CD4-positive, alpha-beta memory T cell (primary cell): ENCODE measurements at regions of chr12 and their contacts with region 1.

Region 1: GRCh38 chr12:110742718-110743570 is at the start of gene PPP1CC:
- DNase-seq: peak; percentile 91 to 95 (median 92)
- H3K4me3 ChIP-seq: peak within 1 kb of the TSS; percentile 66 to 69
- H3K4me3 Mint-ChIP-seq: peak within 1 kb of the TSS; percentile 96 to 100 (median 100)
- H3K27ac ChIP-seq: peak within 1 kb of the TSS; percentile 59
- H3K27ac Mint-ChIP-seq: peak within 1 kb of the TSS; percentile 96 to 99 (median 98)
- H3K4me1 ChIP-seq: peaks cover 32% of the 10 kb centered on the region
- H3K4me1 Mint-ChIP-seq: peaks cover 26 to 65% (median 41%) of the 10 kb centered on the region in 4 donors
- H3K27me3 ChIP-seq: no peaks in the 10 kb centered on the region
- H3K27me3 Mint-ChIP-seq: no peaks in the 10 kb centered on the region
- total RNA-seq, gene PPP1CC: 147 to 168 TPM

Region 2: GRCh38 chr12:110403146-110403975 is 339.6 kb before region 1 on chr12 and contains the start of gene ANAPC7:
- CTCF ChIA-PET with region 1: no interaction called
- POLR2A ChIA-PET with region 1: interaction called, 3 read pairs
- intact Hi-C with region 1: loop called (anchors 1 kb)
- DNase-seq: peak; percentile 88 to 90 (median 89)
- H3K4me3 ChIP-seq: peak within 1 kb of the TSS; percentile 80 to 93
- H3K4me3 Mint-ChIP-seq: peak within 1 kb of the TSS; percentile 98 to 100 (median 100)
- H3K27ac ChIP-seq: peak within 1 kb of the TSS; percentile 82
- H3K27ac Mint-ChIP-seq: peak within 1 kb of the TSS in 6 of 7 donors; percentile 98 to 99 (median 99)
- H3K4me1 ChIP-seq: peaks cover 32% of the 10 kb centered on the region
- H3K4me1 Mint-ChIP-seq: peaks cover 18 to 44% (median 30%) of the 10 kb centered on the region in 4 donors
- H3K27me3 ChIP-seq: no peaks in the 10 kb centered on the region
- H3K27me3 Mint-ChIP-seq: no peaks in the 10 kb centered on the region
- total RNA-seq, gene ANAPC7: 69.9 to 70.1 TPM

Region 3: DNA sequence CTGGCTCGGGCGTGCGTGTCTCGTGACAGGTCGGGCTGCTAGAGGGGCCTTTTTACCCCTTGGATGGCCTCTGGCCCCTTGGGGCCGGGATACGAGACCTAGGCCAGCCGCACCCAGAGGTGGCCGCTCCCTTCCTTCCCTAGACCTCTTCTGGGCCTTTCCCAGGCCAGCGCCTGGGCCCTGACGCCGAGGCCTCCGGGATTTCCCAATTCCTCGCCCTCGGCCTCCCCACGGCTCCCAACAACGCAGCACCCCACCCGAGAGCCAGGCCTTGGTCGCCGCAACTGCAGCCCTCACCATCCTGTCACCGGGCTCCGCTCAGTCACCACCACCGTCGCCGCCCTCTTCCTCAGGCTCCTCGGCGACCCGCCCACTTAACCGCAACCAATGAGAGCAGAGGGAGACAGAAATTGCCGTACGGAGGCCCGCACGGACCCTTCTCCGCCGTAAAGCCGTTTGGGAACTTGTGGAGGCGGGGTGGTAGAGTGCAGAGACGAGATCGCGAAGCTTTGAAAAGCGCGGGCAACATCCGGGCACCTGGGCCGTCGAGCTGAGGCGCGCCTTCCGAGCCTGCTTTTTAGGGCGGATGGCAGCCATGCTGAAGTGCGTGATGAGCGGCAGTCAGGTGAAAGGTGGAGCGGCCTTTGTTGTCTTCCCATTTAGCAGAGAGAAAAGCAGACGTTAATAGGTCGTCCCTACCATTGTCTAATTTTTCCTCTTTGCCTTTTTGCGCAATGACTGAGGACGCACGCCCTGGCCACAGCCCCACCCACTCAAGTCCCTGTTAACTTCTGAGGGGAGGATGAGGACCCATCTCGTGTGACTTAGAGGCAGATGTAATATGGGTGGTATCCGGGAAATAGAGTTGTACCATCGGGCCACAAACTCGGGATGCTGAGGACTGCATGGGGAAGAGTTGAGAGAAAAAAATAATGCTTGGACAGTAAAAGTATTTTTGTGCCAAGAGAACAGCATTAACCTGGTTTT is 240.9 kb before region 1 on chr12 and contains the starts of genes RAD9B and VPS29:
- CTCF ChIA-PET with region 1: no interaction called
- POLR2A ChIA-PET with region 1: interaction called, 3 read pairs
- intact Hi-C with region 1: loop called (anchors 2 kb)
- DNase-seq: peak; percentile 99 to 100 (median 99)
- H3K4me3 ChIP-seq: peak within 1 kb of the TSS; percentile 85 to 91
- H3K4me3 Mint-ChIP-seq: peak within 1 kb of the TSS; percentile 96 to 99 (median 98)
- H3K27ac ChIP-seq: peak within 1 kb of the TSS; percentile 94
- H3K27ac Mint-ChIP-seq: peak within 1 kb of the TSS; percentile 95 to 99 (median 97)
- H3K4me1 ChIP-seq: peaks cover 35% of the 10 kb centered on the region
- H3K4me1 Mint-ChIP-seq: peaks cover 20 to 44% (median 30%) of the 10 kb centered on the region in 4 donors
- H3K27me3 ChIP-seq: no peaks in the 10 kb centered on the region
- H3K27me3 Mint-ChIP-seq: no peaks in the 10 kb centered on the region
- total RNA-seq, gene RAD9B: 1.1 to 2.1 TPM
- total RNA-seq, gene VPS29: 117 to 121 TPM

Region 4: DNA sequence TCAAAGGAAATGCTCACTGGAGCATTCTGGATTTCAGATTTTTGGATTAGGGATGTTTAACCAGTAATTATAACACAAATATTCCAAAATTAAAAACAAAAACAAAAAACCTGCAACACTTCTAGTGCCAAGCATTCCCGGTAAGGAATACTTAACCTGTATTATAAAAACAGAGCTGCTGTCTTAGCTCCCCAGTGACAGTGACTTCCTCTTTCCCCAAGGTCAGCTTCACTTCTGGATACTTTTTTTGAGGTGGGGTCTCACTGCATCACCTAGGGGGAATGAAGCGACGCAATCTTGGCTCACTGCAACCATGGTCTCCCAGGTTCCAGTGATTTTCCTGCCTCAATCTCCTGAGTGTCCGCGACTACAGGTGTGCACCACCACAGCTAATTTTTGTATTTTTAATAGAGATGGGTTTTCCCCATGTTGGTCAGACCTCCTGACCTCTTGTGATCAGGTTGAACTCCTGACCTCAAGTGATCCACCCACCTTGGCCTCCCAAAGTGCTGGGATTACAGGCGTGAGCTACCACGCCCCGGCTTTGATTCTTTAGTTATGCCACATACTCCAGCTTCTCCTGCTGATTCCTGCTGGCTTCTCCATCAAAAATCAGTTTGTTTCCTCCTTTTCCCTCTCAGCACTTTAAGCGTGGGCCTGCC is 16.1 kb before region 1 on chr12:
- CTCF ChIA-PET with region 1: interaction called, 4 read pairs
- POLR2A ChIA-PET with region 1: interaction called, 12 read pairs
- intact Hi-C with region 1: loop called (anchors 1 kb)
- DNase-seq: no peak
- H3K4me3 ChIP-seq: no peak overlapping the region
- H3K4me3 Mint-ChIP-seq: peak overlapping the region in 2 of 8 donors; percentile 40 to 58
- H3K27ac ChIP-seq: peak overlapping the region; percentile 49
- H3K27ac Mint-ChIP-seq: peak overlapping the region; percentile 74 to 97 (median 87)
- H3K4me1 ChIP-seq: peaks cover 55% of the 10 kb centered on the region
- H3K4me1 Mint-ChIP-seq: peaks cover 28 to 63% (median 43%) of the 10 kb centered on the region in 4 donors
- H3K27me3 ChIP-seq: no peaks in the 10 kb centered on the region
- H3K27me3 Mint-ChIP-seq: no peaks in the 10 kb centered on the region

Region 5: DNA sequence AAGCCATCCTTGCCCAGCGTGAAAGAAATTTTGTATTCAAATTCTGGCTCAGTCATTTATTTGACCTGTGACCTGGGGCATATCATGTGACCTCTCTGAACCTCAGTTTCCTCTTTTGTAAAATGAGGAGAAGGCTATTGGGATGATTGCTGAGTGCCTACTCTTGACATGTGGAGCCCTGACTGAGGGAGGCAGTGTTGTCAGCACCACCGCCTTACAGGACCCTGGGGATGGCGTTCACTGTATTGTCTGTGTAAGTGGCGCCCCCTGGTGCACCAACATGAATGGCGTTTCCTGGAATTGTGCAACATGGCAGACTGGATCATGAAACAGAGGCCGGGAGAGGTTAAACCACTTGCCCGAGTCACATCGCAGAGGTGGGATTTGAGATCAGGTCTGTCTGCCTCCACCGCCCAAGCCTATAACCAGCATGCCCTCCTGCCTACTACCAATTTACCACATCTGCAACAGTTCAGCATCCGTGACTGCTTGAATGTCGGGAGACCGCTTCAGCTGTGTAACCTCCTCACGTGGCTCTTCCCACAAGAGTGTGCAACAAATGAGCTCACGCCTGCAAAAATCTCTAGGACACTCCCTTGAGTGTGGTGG is 83.8 kb after region 1 on chr12:
- CTCF ChIA-PET with region 1: interaction called, 6 read pairs
- POLR2A ChIA-PET with region 1: interaction called, 4 read pairs
- intact Hi-C with region 1: loop called (anchors 1 kb)
- DNase-seq: peak; percentile 73 to 83 (median 77)
- H3K4me3 ChIP-seq: peak overlapping the region in 1 of 2 donors; percentile 5
- H3K4me3 Mint-ChIP-seq: peak overlapping the region; percentile 36 to 76 (median 66)
- H3K27ac ChIP-seq: no peak overlapping the region
- H3K27ac Mint-ChIP-seq: peak overlapping the region in 3 of 7 donors; percentile 9 to 89 (median 60)
- H3K4me1 ChIP-seq: peaks cover 6% of the 10 kb centered on the region
- H3K4me1 Mint-ChIP-seq: peaks cover 3 to 7% (median 7%) of the 10 kb centered on the region in 4 donors
- H3K27me3 ChIP-seq: no peaks in the 10 kb centered on the region
- H3K27me3 Mint-ChIP-seq: peaks cover 1 to 4% of the 10 kb centered on the region in 2 donors

Region 6: GRCh38 chr12:112252184-112252583 is 1509.2 kb after region 1 on chr12:
- CTCF ChIA-PET with region 1: no interaction called
- POLR2A ChIA-PET with region 1: no interaction called
- intact Hi-C with region 1: no loop called
- DNase-seq: no peak
- H3K4me3 ChIP-seq: no peak overlapping the region
- H3K4me3 Mint-ChIP-seq: no peak overlapping the region
- H3K27ac ChIP-seq: no peak overlapping the region
- H3K27ac Mint-ChIP-seq: peak overlapping the region in 2 of 7 donors; percentile 65 to 84
- H3K4me1 ChIP-seq: no peaks in the 10 kb centered on the region
- H3K4me1 Mint-ChIP-seq: no peaks in the 10 kb centered on the region
- H3K27me3 ChIP-seq: no peaks in the 10 kb centered on the region
- H3K27me3 Mint-ChIP-seq: no peaks in the 10 kb centered on the region